ENCODE measurements at regions of chr1 and their contacts with region 1.

Region 1: DNA sequence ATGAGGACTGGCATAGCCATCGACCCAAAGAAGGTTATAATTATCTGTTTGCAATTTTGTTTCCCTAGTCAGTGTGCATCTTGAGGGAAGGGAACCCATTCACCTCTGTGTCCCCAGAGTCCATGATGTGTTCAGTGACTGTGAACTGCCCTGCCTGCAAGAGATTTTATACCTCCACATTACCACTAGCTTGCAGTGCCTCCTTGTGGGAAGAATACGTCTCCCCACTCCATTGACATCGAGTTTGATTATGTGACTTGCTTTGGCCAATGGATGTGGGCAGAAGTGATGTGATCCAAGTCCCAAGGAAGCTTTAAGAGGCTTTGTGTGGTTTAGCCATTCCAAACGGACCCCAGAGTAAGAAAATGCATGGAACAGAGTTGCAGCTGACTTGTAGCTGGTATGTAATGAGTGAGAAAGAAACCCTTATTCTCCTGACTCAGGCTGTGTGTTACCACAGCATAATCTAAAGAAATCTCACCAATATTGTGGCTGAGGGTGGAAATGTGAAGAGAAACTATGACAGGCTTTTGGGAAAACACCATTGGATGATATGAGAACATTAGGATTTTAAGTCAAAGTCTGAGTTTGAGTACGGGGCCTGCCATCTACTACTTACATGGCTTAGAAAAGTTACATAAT is 47.8 kb upstream of the NRDC start:
- DNase-seq: no peak
- H3K4me3 ChIP-seq: no peak overlapping the region
- H3K27ac ChIP-seq: no peak overlapping the region
- H3K4me1 ChIP-seq: no peaks in the 10 kb centered on the region
- H3K27me3 ChIP-seq: no peaks in the 10 kb centered on the region
- CTCF ChIP-seq: no peak
- POLR2A ChIP-seq: no peak

Region 2: GRCh38 chr1:51871351-51871975 is 54.8 kb before region 1 on chr1:
- intact Hi-C with region 1: no loop called
- DNase-seq: no peak
- H3K4me3 ChIP-seq: no peak overlapping the region
- H3K27ac ChIP-seq: no peak overlapping the region
- H3K4me1 ChIP-seq: peaks cover 0 to 11% of the 10 kb centered on the region in 2 donors
- H3K27me3 ChIP-seq: no peaks in the 10 kb centered on the region
- CTCF ChIP-seq: no peak
- POLR2A ChIP-seq: no peak

Region 3: GRCh38 chr1:53485478-53486394 is 1559.4 kb after region 1 on chr1:
- intact Hi-C with region 1: loop called (anchors 5 kb)
- DNase-seq: peak; percentile 38 to 83
- H3K4me3 ChIP-seq: no peak overlapping the region
- H3K27ac ChIP-seq: no peak overlapping the region
- H3K4me1 ChIP-seq: no peaks in the 10 kb centered on the region
- H3K27me3 ChIP-seq: peaks cover 0 to 17% of the 10 kb centered on the region in 2 donors
- CTCF ChIP-seq: peak in 2 of 3 donors; percentile 76 to 82
- POLR2A ChIP-seq: no peak

Measured in breast epithelium (tissue), 4 donors.